Head of caudate nucleus (tissue), 42 donors: ENCODE measurements at regions of chr1 and their contacts with region 1.

Region 1: GRCh38 chr1:25997828-25998761 is at the start of gene PAFAH2:
- DNase-seq: peak; percentile 93 to 99 (median 97)

Region 2: DNA sequence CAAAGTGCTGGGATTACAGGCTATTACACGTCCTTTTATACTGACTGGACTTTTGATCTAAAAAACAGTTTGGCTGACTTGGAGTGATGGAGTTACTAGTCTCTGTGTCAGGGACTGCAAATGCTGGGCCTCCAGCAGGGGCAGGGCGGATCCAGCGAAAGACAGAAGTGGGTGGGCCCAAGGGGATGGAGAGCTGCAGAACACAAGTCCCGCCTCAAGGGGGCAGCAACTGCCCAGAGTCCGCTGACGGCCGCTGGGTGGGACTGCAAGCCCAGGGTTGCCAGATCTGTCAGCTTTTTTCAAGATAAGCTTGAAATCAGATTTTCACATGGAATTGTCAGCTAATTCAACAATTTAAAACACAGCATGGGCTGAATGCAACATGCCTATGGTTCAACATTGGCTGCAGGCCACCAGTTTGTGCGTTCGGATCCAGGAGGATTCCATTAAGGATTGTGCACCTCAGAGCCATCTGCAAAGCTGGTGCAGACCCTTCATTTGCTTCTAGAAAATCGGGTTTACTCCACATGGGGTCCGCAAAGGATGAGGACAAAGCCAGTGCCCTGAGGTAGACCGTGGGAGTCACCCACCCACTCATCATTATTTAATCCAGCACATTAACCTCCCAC is 102.6 kb before region 1 on chr1:
- intact Hi-C with region 1: loop called (anchors 1 kb)
- DNase-seq: peak; percentile 88 to 97 (median 93)